ENCODE measurements at regions of chr1 and their contacts with region 1.

Region 1: DNA sequence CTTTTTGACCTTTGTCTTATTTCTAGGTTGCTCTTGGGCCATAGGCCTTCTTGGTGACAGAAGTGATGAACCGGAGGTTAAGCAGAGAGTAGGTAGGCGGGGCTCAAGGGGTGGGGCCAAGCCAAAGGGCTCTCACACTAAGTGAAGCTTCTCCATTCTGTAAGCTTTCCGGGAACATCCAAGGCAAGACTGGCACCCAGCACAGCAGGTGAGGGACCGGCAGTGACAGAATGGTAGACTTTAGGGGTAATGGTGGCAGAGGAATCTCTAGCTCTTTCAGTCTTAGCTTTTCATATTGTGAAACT is at the start of gene TNFAIP8L2:
- DNase-seq: peak; percentile 51 to 84 (median 84)
- ATAC-seq: peak; percentile 50 to 60
- H3K4me3 ChIP-seq: peak within 1 kb of the TSS; percentile 27
- H3K27ac ChIP-seq: peak within 1 kb of the TSS; percentile 15
- H3K4me1 ChIP-seq: no peaks in the 10 kb centered on the region
- H3K27me3 ChIP-seq: no peaks in the 10 kb centered on the region
- total RNA-seq, gene TNFAIP8L2: 1.8 to 3.7 (median 2.3) TPM

Region 2: GRCh38 chr1:151098126-151098525 is 58.3 kb before region 1 on chr1:
- intact Hi-C with region 1: loop called (anchors 2 to 10 kb)
- DNase-seq: no peak
- ATAC-seq: no peak
- H3K4me3 ChIP-seq: no peak overlapping the region
- H3K27ac ChIP-seq: no peak overlapping the region
- H3K4me1 ChIP-seq: no peaks in the 10 kb centered on the region
- H3K27me3 ChIP-seq: no peaks in the 10 kb centered on the region

Region 3: GRCh38 chr1:151106894-151107293 is 49.6 kb before region 1 on chr1:
- intact Hi-C with region 1: loop called in 1 of 4 experiments (anchors 10 kb)
- DNase-seq: no peak
- ATAC-seq: no peak
- H3K4me3 ChIP-seq: no peak overlapping the region
- H3K27ac ChIP-seq: no peak overlapping the region
- H3K4me1 ChIP-seq: no peaks in the 10 kb centered on the region
- H3K27me3 ChIP-seq: no peaks in the 10 kb centered on the region